Aorta (tissue), 5 donors: ENCODE measurements at regions of chr20 and their contacts with region 1.

Region 1: DNA sequence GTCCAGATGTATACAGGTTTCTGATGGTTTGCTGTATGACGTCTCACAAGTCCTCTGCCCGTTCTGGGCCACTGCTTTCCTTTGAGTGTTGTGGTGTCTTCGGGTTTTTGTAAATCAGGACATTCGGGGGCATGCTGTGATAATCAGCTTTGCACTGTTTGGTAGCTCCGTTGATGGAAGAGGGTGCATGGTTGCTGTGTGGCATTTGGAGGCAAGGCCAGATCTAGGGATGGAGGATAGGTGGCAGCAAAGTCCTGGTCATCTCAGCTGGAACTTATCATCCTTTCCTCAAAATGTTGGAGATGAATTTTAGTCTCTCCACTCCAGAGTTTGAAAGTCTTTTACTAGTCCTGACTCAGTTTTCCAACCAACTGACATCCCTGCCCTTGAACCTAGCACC is 91.0 kb downstream of the SCP2D1 start:
- DNase-seq: no peak
- ATAC-seq: no peak
- H3K4me3 ChIP-seq: no peak overlapping the region
- H3K27ac ChIP-seq: no peak overlapping the region
- H3K4me1 ChIP-seq: no peaks in the 10 kb centered on the region
- H3K27me3 ChIP-seq: no peaks in the 10 kb centered on the region

Region 2: DNA sequence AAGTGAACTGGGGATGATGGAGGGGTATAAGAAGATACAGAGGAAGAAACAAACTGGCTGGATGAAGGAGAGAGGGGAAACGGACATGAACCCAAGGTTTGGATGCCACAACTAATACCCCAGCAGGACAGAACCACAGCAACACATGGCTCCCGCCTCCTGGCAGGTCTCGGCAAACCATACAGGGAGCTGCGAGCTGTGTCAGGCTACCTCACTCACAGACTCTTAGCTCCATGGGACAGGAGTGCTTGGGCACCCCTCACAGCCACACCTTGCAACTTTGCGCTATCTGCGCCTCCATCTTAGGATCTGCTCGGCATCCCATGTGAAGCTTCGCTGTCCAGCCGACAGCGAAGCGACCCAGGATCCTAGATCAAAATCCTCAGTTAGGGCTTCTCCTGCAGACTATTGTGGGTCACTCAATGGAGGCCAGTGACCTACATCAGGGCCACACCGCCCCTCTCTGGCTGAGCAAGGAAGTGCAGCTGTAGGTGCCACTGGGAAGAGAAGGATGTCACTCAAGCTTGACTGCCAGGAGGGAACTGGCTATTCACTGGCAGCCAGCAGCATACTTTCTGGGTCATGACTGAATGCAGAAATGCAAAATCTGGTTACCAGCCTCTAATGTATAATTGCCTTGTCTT is 679.0 kb after region 1 on chr20:
- intact Hi-C with region 1: loop called in 1 of 2 experiments (anchors 10 kb)
- DNase-seq: peak; percentile 74 to 91
- ATAC-seq: peak; percentile 66
- H3K4me3 ChIP-seq: no peak overlapping the region
- H3K27ac ChIP-seq: no peak overlapping the region
- H3K4me1 ChIP-seq: peaks cover 0 to under 1% of the 10 kb centered on the region in 2 donors
- H3K27me3 ChIP-seq: no peaks in the 10 kb centered on the region

Region 3: GRCh38 chr20:19661717-19662636 is 757.4 kb after region 1 on chr20:
- intact Hi-C with region 1: loop called in 1 of 2 experiments (anchors 5 kb)
- DNase-seq: peak in 1 of 2 donors; percentile 68
- ATAC-seq: peak; percentile 90
- H3K4me3 ChIP-seq: no peak overlapping the region
- H3K27ac ChIP-seq: no peak overlapping the region
- H3K4me1 ChIP-seq: peaks cover 0 to 3% of the 10 kb centered on the region in 2 donors
- H3K27me3 ChIP-seq: no peaks in the 10 kb centered on the region